Naive thymus-derived CD4-positive, alpha-beta T cell (primary cell): ENCODE measurements at regions of chr7 and their contacts with region 1.

Region 1: DNA sequence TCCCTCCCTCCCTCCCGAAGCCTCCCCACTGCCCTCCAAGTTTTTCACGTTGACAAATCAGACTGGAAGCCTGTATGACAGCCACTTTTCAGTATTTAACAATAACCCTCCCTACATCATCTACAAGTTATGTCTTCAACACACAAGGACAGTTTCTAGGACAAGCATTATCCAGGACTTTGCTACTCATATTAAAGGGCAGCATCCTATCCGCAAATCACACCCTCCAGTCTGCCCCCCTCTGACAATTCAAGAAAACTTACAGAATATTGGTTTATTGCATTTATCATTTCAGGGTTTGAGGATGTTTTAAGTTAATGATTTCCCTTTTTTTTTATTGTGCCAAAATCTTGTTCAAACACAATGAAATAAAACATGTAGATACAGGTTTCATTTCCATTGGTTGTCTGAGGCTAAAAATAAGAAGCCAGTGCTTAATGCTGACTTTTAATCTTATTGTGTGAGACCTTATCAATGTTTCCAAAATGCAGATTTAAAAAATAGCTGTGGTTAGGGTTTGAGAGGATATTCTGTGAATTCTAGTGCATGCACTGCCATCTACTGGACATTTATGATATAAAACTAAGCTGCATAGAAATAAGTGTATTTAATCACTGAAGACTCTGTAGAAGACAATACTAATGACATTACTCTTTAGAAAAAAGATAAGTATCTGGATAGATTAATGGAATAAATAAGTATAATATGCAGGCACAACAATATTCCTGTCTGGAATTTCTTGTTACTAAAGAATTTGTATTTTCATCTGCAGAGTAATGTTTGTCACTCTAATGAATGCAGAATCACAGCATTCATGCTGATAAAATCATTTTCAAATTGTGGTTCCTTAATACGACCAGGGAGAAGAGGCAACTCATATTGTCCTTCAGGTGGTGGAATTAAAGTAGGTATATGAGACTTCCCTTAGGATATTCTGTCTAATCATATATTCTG is 64.1 kb downstream of the CAV1 start:
- DNase-seq: peak in 5 of 9 donors; percentile 22 to 40 (median 32)
- ATAC-seq: peak; percentile 69
- H3K4me3 ChIP-seq: no peak overlapping the region
- H3K4me3 Mint-ChIP-seq: no peak overlapping the region
- H3K27ac ChIP-seq: no peak overlapping the region
- H3K27ac Mint-ChIP-seq: no peak overlapping the region
- H3K4me1 ChIP-seq: no peaks in the 10 kb centered on the region
- H3K4me1 Mint-ChIP-seq: peaks cover 15 to 27% (median 19%) of the 10 kb centered on the region in 7 donors
- H3K27me3 ChIP-seq: no peaks in the 10 kb centered on the region
- H3K27me3 Mint-ChIP-seq: peaks cover 22 to 32% (median 26%) of the 10 kb centered on the region in 5 donors

Region 2: GRCh38 chr7:116180302-116180701 is 408.6 kb before region 1 on chr7:
- CTCF ChIA-PET with region 1: interaction called, 14 read pairs
- POLR2A ChIA-PET with region 1: no interaction called
- intact Hi-C with region 1: loop called in 1 of 2 experiments (anchors 2 kb)
- DNase-seq: peak in 7 of 9 donors; percentile 47 to 73 (median 61)
- ATAC-seq: peak; percentile 84
- H3K4me3 ChIP-seq: no peak overlapping the region
- H3K4me3 Mint-ChIP-seq: no peak overlapping the region
- H3K27ac ChIP-seq: no peak overlapping the region
- H3K27ac Mint-ChIP-seq: peak overlapping the region in 1 of 9 donors; percentile 36
- H3K4me1 ChIP-seq: peaks cover 0 to 3% of the 10 kb centered on the region in 2 donors
- H3K4me1 Mint-ChIP-seq: peaks cover 0 to 12% (median 2%) of the 10 kb centered on the region in 7 donors
- H3K27me3 ChIP-seq: no peaks in the 10 kb centered on the region
- H3K27me3 Mint-ChIP-seq: peaks cover 0 to 15% (median 0%) of the 10 kb centered on the region in 5 donors

Region 3: GRCh38 chr7:116525913-116526861 is 62.7 kb before region 1 on chr7:
- CTCF ChIA-PET with region 1: interaction called, 3 read pairs
- POLR2A ChIA-PET with region 1: no interaction called
- intact Hi-C with region 1: loop called (anchors 5 to 10 kb)
- DNase-seq: peak; percentile 21 to 73 (median 52)
- ATAC-seq: peak; percentile 93
- H3K4me3 ChIP-seq: peak overlapping the region; percentile 48
- H3K4me3 Mint-ChIP-seq: peak overlapping the region; percentile 76 to 89 (median 83)
- H3K27ac ChIP-seq: no peak overlapping the region
- H3K27ac Mint-ChIP-seq: peak overlapping the region in 1 of 9 donors; percentile 32
- H3K4me1 ChIP-seq: peaks cover 9 to 14% of the 10 kb centered on the region in 2 donors
- H3K4me1 Mint-ChIP-seq: peaks cover 8 to 22% (median 21%) of the 10 kb centered on the region in 7 donors
- H3K27me3 ChIP-seq: peaks cover 19 to 22% of the 10 kb centered on the region in 2 donors
- H3K27me3 Mint-ChIP-seq: peaks cover 70 to 85% (median 77%) of the 10 kb centered on the region in 5 donors

Region 4: GRCh38 chr7:116736927-116737715 is 148.2 kb after region 1 on chr7:
- CTCF ChIA-PET with region 1: no interaction called
- POLR2A ChIA-PET with region 1: no interaction called
- intact Hi-C with region 1: no loop called
- DNase-seq: no peak
- ATAC-seq: no peak
- H3K4me3 ChIP-seq: no peak overlapping the region
- H3K4me3 Mint-ChIP-seq: no peak overlapping the region
- H3K27ac ChIP-seq: no peak overlapping the region
- H3K27ac Mint-ChIP-seq: no peak overlapping the region
- H3K4me1 ChIP-seq: no peaks in the 10 kb centered on the region
- H3K4me1 Mint-ChIP-seq: no peaks in the 10 kb centered on the region
- H3K27me3 ChIP-seq: no peaks in the 10 kb centered on the region
- H3K27me3 Mint-ChIP-seq: peaks cover 2 to 31% (median 16%) of the 10 kb centered on the region in 5 donors

Region 5: GRCh38 chr7:116809636-116810266 is 220.8 kb after region 1 on chr7:
- CTCF ChIA-PET with region 1: interaction called, 4 read pairs
- POLR2A ChIA-PET with region 1: no interaction called
- intact Hi-C with region 1: loop called (anchors 1 kb)
- DNase-seq: peak in 6 of 9 donors; percentile 14 to 34 (median 23)
- ATAC-seq: peak; percentile 69
- H3K4me3 ChIP-seq: no peak overlapping the region
- H3K4me3 Mint-ChIP-seq: no peak overlapping the region
- H3K27ac ChIP-seq: no peak overlapping the region
- H3K27ac Mint-ChIP-seq: no peak overlapping the region
- H3K4me1 ChIP-seq: no peaks in the 10 kb centered on the region
- H3K4me1 Mint-ChIP-seq: no peaks in the 10 kb centered on the region
- H3K27me3 ChIP-seq: no peaks in the 10 kb centered on the region
- H3K27me3 Mint-ChIP-seq: peaks cover 0 to 22% (median 4%) of the 10 kb centered on the region in 5 donors